PC-3 (cell line): ENCODE measurements at regions of chr7 and their contacts with region 1.

Region 1: GRCh38 chr7:73769992-73770859 is at the start of gene CLDN3:
- DNase-seq: peak; percentile 92
- ATAC-seq: peak; percentile 93
- H3K4me3 ChIP-seq: peak within 1 kb of the TSS; percentile 69
- H3K27ac ChIP-seq: peak within 1 kb of the TSS; percentile 39
- H3K4me1 ChIP-seq: peaks cover 23% of the 10 kb centered on the region; the same call in 1 of the 2 replicates
- H3K27me3 ChIP-seq: no peaks in the 10 kb centered on the region
- CTCF ChIP-seq: no peak
- total RNA-seq, gene CLDN3: 51.6 and 70.7 TPM in 2 replicates

Region 2: GRCh38 chr7:73738612-73739374 is 31.4 kb before region 1 on chr7 and contains the start of gene ABHD11:
- CTCF ChIA-PET with region 1: no interaction called
- POLR2A ChIA-PET with region 1: interaction called, 4 read pairs
- intact Hi-C with region 1: loop called (anchors 2 kb)
- DNase-seq: peak; percentile 95
- ATAC-seq: peak; percentile 76
- H3K4me3 ChIP-seq: peak within 1 kb of the TSS; percentile 92
- H3K27ac ChIP-seq: peak within 1 kb of the TSS; percentile 73
- H3K4me1 ChIP-seq: peaks cover 36% of the 10 kb centered on the region
- H3K27me3 ChIP-seq: no peaks in the 10 kb centered on the region
- CTCF ChIP-seq: 0 out of 2 replicates have a peak, but pooled peaks have one; percentile 14
- total RNA-seq, gene ABHD11: 38.6 and 41.4 TPM in 2 replicates